ENCODE measurements at regions of chr1 and their contacts with region 1.

Region 1: DNA sequence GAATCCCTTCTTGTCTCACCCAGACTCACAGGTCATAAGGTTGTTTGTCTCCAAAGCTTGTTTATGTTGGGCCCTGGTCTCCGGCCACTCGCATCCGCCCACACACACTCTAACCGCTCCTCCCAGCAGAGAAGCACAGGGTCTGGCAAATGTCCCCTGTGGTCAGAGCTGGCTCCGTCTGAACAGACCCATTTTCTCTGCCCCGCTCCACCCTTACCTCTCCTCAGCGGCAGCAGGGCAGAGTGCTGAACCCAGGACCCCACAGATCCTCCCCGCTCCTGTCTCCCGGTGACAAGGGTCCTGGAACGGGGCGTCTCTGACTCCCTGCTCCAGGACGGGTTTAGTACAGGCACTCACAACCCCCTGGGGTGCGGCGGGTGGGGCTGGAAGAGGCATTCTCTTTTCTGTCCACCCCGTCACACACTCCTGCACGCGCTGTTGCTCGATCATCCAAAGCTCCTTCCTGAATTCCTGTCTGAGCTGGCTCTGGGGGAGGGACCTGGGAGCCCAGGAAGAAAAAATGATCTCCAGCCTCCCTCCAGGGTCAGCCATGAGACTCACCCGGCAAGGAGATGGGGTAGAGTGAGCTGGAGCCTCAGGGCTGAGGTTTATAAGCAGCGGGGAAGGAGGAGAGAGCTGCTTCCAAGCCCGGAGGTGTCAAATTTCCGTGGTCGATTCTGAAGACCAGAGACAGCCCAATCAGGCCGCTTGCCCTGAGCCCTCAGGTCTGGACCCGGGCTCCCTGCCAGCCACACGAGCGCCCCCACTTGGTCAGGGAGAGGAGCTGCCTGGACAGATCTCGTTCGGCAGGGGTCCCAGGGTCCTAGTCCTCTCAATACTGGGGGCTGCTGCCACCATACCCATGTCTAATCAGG is at the start of gene S100A13:
- DNase-seq: peak; percentile 92 to 94
- H3K4me3 ChIP-seq: peak within 1 kb of the TSS; percentile 45 to 77 (median 72)
- H3K27ac ChIP-seq: peak within 1 kb of the TSS; percentile 59
- H3K4me1 ChIP-seq: peaks cover 0 to 13% (median 7%) of the 10 kb centered on the region in 4 experiments; a peak in 6 of 7 replicates
- H3K27me3 ChIP-seq: no peaks in the 10 kb centered on the region
- CTCF ChIP-seq: peak; percentile 86 to 94 (median 90)
- EP300 ChIP-seq: no peak
- POLR2A ChIP-seq: peak; percentile 94 to 98
- RAD21 ChIP-seq: peak; percentile 67 to 78
- total RNA-seq, gene S100A13: 63.6 and 65.3 TPM in 2 replicates

Region 2: GRCh38 chr1:153510984-153511410 is 116.2 kb before region 1 on chr1:
- CTCF ChIA-PET with region 1: interaction called, 43 read pairs
- POLR2A ChIA-PET with region 1: no interaction called
- DNase-seq: peak in 1 of 2 experiments; percentile 93
- H3K4me3 ChIP-seq: no peak overlapping the region
- H3K27ac ChIP-seq: no peak overlapping the region
- H3K4me1 ChIP-seq: peaks cover 0 to 3% (median 1%) of the 10 kb centered on the region in 4 experiments; a peak in 3 of 7 replicates
- H3K27me3 ChIP-seq: peaks cover 0 to 5% (median 2%) of the 10 kb centered on the region in 4 experiments; a peak in 3 of 7 replicates
- CTCF ChIP-seq: peak; percentile 95 to 97 (median 95)
- EP300 ChIP-seq: no peak
- POLR2A ChIP-seq: no peak
- RAD21 ChIP-seq: peak; percentile 99 to 100

Region 3: GRCh38 chr1:153532769-153533599 is 94.2 kb before region 1 on chr1:
- CTCF ChIA-PET with region 1: interaction called, 63 read pairs
- POLR2A ChIA-PET with region 1: interaction called, 17 read pairs
- DNase-seq: peak; percentile 87 to 96
- H3K4me3 ChIP-seq: peak overlapping the region; percentile 12 to 54 (median 38); a peak in 7 of 8 replicates
- H3K27ac ChIP-seq: no peak overlapping the region
- H3K4me1 ChIP-seq: peaks cover 8 to 35% (median 21%) of the 10 kb centered on the region in 4 experiments
- H3K27me3 ChIP-seq: peaks cover 0 to 19% (median 6%) of the 10 kb centered on the region in 4 experiments; a peak in 5 of 7 replicates
- CTCF ChIP-seq: peak; percentile 85 to 93 (median 86)
- EP300 ChIP-seq: no peak
- POLR2A ChIP-seq: no peak
- RAD21 ChIP-seq: peak; percentile 78 to 92

Region 4: DNA sequence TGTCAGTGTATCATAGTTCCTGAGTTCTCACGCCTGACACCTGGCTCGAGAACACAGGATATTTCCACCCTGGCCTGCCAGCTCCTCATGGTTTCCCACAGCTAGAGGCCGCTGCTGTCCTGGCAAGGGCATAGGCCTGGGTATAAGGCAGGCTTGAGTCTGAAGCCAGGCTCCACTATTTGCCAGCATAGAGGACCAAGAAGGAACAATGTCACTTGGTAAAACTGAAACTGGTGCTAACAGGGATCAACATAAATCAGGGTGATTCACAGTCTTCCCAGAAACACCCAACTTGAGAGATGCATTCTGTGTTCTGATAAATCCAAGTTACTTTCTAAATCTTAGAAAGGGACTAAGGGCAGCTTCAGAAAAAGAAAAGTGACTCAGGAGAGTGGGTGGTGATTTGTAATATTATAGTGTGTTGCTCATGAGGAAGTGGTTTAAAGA is 54.6 kb before region 1 on chr1:
- CTCF ChIA-PET with region 1: interaction called, 115 read pairs
- POLR2A ChIA-PET with region 1: interaction called, 20 read pairs
- DNase-seq: peak in 1 of 2 experiments; percentile 43
- H3K4me3 ChIP-seq: no peak overlapping the region
- H3K27ac ChIP-seq: no peak overlapping the region
- H3K4me1 ChIP-seq: peaks cover 4 to 8% (median 7%) of the 10 kb centered on the region in 4 experiments; a peak in 6 of 7 replicates
- H3K27me3 ChIP-seq: 0 out of 7 replicates have a peak, but pooled peaks cover 0 to 4% (median 0%) of the 10 kb centered on the region in 4 experiments
- CTCF ChIP-seq: peak; percentile 91 to 95 (median 92)
- EP300 ChIP-seq: no peak
- POLR2A ChIP-seq: no peak
- RAD21 ChIP-seq: peak; percentile 93 to 97

Region 5: DNA sequence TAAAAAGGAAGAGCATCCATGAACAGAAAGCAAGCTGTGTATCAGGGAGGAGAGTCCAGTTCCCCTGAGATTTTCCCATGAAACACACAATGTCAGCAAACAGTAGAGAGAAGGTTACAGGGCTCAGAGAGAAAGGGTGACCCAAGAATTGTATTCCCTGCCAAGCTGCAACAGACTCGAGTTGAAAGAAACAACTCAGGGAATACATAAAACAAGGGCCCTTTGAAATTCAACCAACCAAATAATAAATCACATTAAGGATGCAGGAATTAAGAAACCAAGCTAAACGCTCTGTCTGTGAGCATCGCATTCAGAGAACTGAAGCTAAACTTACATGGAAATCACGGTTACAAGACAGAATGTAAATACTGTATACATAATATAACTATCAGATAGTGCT is 34.4 kb before region 1 on chr1:
- CTCF ChIA-PET with region 1: interaction called, 16 read pairs
- POLR2A ChIA-PET with region 1: interaction called, 20 read pairs
- DNase-seq: no peak
- H3K4me3 ChIP-seq: no peak overlapping the region
- H3K27ac ChIP-seq: no peak overlapping the region
- H3K4me1 ChIP-seq: no peaks in the 10 kb centered on the region
- H3K27me3 ChIP-seq: no peaks in the 10 kb centered on the region
- CTCF ChIP-seq: no peak
- EP300 ChIP-seq: no peak
- POLR2A ChIP-seq: no peak
- RAD21 ChIP-seq: no peak

Region 6: GRCh38 chr1:153639280-153639679 is 12.1 kb after region 1 on chr1:
- CTCF ChIA-PET with region 1: interaction called, 28 read pairs
- POLR2A ChIA-PET with region 1: interaction called, 42 read pairs
- DNase-seq: no peak
- H3K4me3 ChIP-seq: no peak overlapping the region
- H3K27ac ChIP-seq: no peak overlapping the region
- H3K4me1 ChIP-seq: no peaks in the 10 kb centered on the region
- H3K27me3 ChIP-seq: no peaks in the 10 kb centered on the region
- CTCF ChIP-seq: no peak
- EP300 ChIP-seq: no peak
- POLR2A ChIP-seq: no peak
- RAD21 ChIP-seq: no peak